H1 (cell line): ENCODE measurements at regions of chr5 and their contacts with region 1.

Region 1: GRCh38 chr5:69093771-69094482 is at the start of gene SLC30A5:
- DNase-seq: peak; percentile 95 to 100
- H3K4me3 ChIP-seq: peak within 1 kb of the TSS; percentile 48 to 80 (median 69)
- H3K27ac ChIP-seq: peak within 1 kb of the TSS; percentile 38; the same call in 1 of the 2 replicates
- H3K4me1 ChIP-seq: no peaks in the 10 kb centered on the region; a peak in 1 of 7 replicates
- H3K27me3 ChIP-seq: no peaks in the 10 kb centered on the region
- CTCF ChIP-seq: peak; percentile 86 to 94 (median 92)
- EP300 ChIP-seq: peak in 1 of 2 experiments; percentile 49; a peak in 1 of 3 replicates
- POLR2A ChIP-seq: peak in 1 of 2 experiments; percentile 92; a peak in 2 of 3 replicates
- RAD21 ChIP-seq: peak; percentile 90
- total RNA-seq, gene SLC30A5: 36.3 and 43.5 TPM in 2 replicates

Region 2: DNA sequence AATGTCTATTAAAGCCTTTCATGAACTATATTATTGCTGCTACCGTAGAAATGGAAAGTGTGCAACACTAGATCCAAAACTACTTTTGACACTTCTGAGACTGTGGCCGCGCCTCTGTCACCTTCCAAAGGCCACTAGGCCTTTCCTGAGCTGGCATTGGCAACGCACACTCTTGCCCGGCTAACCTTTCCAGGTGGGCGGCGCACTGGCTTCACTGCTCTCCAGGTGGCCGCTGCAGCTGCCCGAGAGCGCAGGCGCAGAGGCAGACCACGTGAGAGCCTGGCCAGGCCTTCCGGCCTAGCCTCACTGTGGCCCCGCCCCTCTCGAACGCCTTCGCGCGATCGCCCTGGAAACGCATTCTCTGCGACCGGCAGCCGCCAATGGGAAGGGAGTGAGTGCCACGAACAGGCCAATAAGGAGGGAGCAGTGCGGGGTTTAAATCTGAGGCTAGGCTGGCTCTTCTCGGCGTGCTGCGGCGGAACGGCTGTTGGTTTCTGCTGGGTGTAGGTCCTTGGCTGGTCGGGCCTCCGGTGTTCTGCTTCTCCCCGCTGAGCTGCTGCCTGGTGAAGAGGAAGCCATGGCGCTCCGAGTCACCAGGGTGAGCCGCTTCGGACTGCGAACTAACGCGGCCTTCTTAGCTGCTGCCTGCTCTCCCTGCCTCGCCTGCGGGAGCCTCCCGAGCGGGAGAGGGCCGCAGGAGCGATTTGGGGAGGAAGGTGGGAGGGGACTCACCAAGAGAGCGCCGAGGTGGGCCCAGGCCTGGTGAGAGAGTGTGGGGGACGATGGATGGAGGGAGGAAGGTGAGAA is 73.0 kb after region 1 on chr5 and contains the start of gene CCNB1:
- CTCF ChIA-PET with region 1: interaction called, 5 read pairs
- POLR2A ChIA-PET with region 1: interaction called, 11 read pairs
- DNase-seq: peak; percentile 98
- H3K4me3 ChIP-seq: peak within 1 kb of the TSS; percentile 74 to 95 (median 88)
- H3K27ac ChIP-seq: peak within 1 kb of the TSS; percentile 95
- H3K4me1 ChIP-seq: peaks cover 0 to 7% (median 4%) of the 10 kb centered on the region in 4 experiments; a peak in 5 of 7 replicates
- H3K27me3 ChIP-seq: no peaks in the 10 kb centered on the region
- CTCF ChIP-seq: no peak
- EP300 ChIP-seq: no peak
- POLR2A ChIP-seq: peak; percentile 73 to 97
- RAD21 ChIP-seq: no peak
- total RNA-seq, gene CCNB1: 338 and 342 TPM in 2 replicates